Endothelial cell of umbilical vein (primary cell): ENCODE measurements at regions of chr3 and their contacts with region 1.

Region 1: DNA sequence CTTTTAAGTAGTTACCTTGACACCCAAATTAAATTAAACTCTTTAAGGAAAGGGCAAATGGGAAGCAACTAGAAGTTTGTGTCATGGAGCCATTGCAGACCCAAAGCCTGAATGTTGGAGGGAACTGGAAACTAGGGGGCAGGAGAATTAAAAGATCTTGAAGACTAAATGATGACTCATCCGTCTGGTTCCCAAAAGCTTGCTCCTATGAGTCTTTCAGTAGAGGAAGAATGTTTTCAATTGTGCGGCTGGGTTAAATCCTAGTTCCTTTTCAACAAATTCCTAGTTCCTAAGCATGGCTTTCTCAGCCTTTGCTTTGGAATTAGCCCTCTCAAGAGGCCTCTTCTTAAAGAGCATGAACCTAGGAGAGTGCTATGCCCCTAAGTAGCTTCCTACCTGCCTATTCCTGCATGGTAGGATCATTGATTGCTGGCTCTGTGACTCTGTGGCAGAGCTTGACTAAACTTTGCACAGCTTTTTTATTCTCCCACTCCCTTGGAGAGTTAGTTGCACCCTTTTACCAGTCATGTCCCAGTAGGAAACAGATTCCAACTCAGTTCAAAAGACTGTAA is 17.7 kb downstream of the CLEC3B start:
- DNase-seq: no peak
- H3K4me3 ChIP-seq: no peak overlapping the region
- H3K27ac ChIP-seq: no peak overlapping the region
- H3K4me1 ChIP-seq: no peaks in the 10 kb centered on the region
- H3K27me3 ChIP-seq: peaks cover 7 to 13% of the 10 kb centered on the region in 2 experiments
- CTCF ChIP-seq: no peak
- POLR2A ChIP-seq: no peak

Region 2: GRCh38 chr3:45055411-45056143 is 11.8 kb after region 1 on chr3:
- CTCF ChIA-PET with region 1: interaction called, 42 read pairs
- POLR2A ChIA-PET with region 1: no interaction called
- dilution Hi-C with region 1: no loop called
- intact Hi-C with region 1: loop called (anchors 2 kb)
- DNase-seq: no peak
- H3K4me3 ChIP-seq: no peak overlapping the region
- H3K27ac ChIP-seq: no peak overlapping the region
- H3K4me1 ChIP-seq: peaks cover 3% of the 10 kb centered on the region
- H3K27me3 ChIP-seq: no peaks in the 10 kb centered on the region
- CTCF ChIP-seq: no peak
- POLR2A ChIP-seq: no peak

Region 3: GRCh38 chr3:45167011-45167911 is 123.4 kb after region 1 on chr3:
- CTCF ChIA-PET with region 1: interaction called, 18 read pairs
- POLR2A ChIA-PET with region 1: no interaction called
- dilution Hi-C with region 1: no loop called
- intact Hi-C with region 1: no loop called
- DNase-seq: peak; percentile 93
- H3K4me3 ChIP-seq: peak overlapping the region in 1 of 3 experiments; percentile 28
- H3K27ac ChIP-seq: peak overlapping the region; percentile 97
- H3K4me1 ChIP-seq: peaks cover 22% of the 10 kb centered on the region
- H3K27me3 ChIP-seq: no peaks in the 10 kb centered on the region
- CTCF ChIP-seq: no peak
- POLR2A ChIP-seq: peak; percentile 11

Region 4: GRCh38 chr3:45216021-45216609 is 172.3 kb after region 1 on chr3:
- CTCF ChIA-PET with region 1: interaction called, 467 read pairs
- POLR2A ChIA-PET with region 1: no interaction called
- dilution Hi-C with region 1: no loop called
- intact Hi-C with region 1: no loop called
- DNase-seq: no peak
- H3K4me3 ChIP-seq: no peak overlapping the region
- H3K27ac ChIP-seq: no peak overlapping the region
- H3K4me1 ChIP-seq: no peaks in the 10 kb centered on the region
- H3K27me3 ChIP-seq: no peaks in the 10 kb centered on the region
- CTCF ChIP-seq: no peak
- POLR2A ChIP-seq: no peak

Region 5: GRCh38 chr3:45343947-45344346 is 300.1 kb after region 1 on chr3:
- CTCF ChIA-PET with region 1: no interaction called
- POLR2A ChIA-PET with region 1: no interaction called
- dilution Hi-C with region 1: no loop called
- intact Hi-C with region 1: loop called (anchors 5 kb)
- DNase-seq: no peak
- H3K4me3 ChIP-seq: no peak overlapping the region
- H3K27ac ChIP-seq: no peak overlapping the region
- H3K4me1 ChIP-seq: no peaks in the 10 kb centered on the region
- H3K27me3 ChIP-seq: peaks cover 0 to 11% of the 10 kb centered on the region in 2 experiments
- CTCF ChIP-seq: no peak
- POLR2A ChIP-seq: no peak

Region 6: GRCh38 chr3:45507820-45508317 is 464.1 kb after region 1 on chr3:
- CTCF ChIA-PET with region 1: interaction called, 31 read pairs
- POLR2A ChIA-PET with region 1: no interaction called
- dilution Hi-C with region 1: loop called (anchors 25 kb)
- intact Hi-C with region 1: no loop called
- DNase-seq: peak; percentile 53
- H3K4me3 ChIP-seq: no peak overlapping the region
- H3K27ac ChIP-seq: no peak overlapping the region
- H3K4me1 ChIP-seq: peaks cover 8% of the 10 kb centered on the region
- H3K27me3 ChIP-seq: no peaks in the 10 kb centered on the region
- CTCF ChIP-seq: peak; percentile 29 to 70
- POLR2A ChIP-seq: no peak